MCF 10A (cell line): ENCODE measurements at regions of chr19 and their contacts with region 1.

Region 1: GRCh38 chr19:51777570-51778462 is 16.8 kb downstream of the FPR2 start:
- DNase-seq: peak; percentile 91
- H3K4me3 Mint-ChIP-seq: no peak overlapping the region
- H3K27ac Mint-ChIP-seq: no peak overlapping the region
- H3K4me1 Mint-ChIP-seq: peaks cover 6% of the 10 kb centered on the region
- H3K27me3 Mint-ChIP-seq: peaks cover 15% of the 10 kb centered on the region
- CTCF ChIP-seq: peak; percentile 80

Region 2: GRCh38 chr19:51676566-51677083 is 101.2 kb before region 1 on chr19:
- CTCF ChIA-PET with region 1: interaction called, 10 read pairs
- POLR2A ChIA-PET with region 1: no interaction called
- intact Hi-C with region 1: no loop called
- DNase-seq: no peak
- H3K4me3 Mint-ChIP-seq: no peak overlapping the region
- H3K27ac Mint-ChIP-seq: no peak overlapping the region
- H3K4me1 Mint-ChIP-seq: no peaks in the 10 kb centered on the region
- H3K27me3 Mint-ChIP-seq: no peaks in the 10 kb centered on the region
- CTCF ChIP-seq: no peak

Region 3: GRCh38 chr19:51712460-51713083 is 65.2 kb before region 1 on chr19:
- CTCF ChIA-PET with region 1: interaction called, 138 read pairs
- POLR2A ChIA-PET with region 1: interaction called, 27 read pairs
- intact Hi-C with region 1: loop called (anchors 1 kb)
- DNase-seq: peak; percentile 79
- H3K4me3 Mint-ChIP-seq: no peak overlapping the region
- H3K27ac Mint-ChIP-seq: peak overlapping the region; percentile 13
- H3K4me1 Mint-ChIP-seq: peaks cover 43% of the 10 kb centered on the region
- H3K27me3 Mint-ChIP-seq: no peaks in the 10 kb centered on the region
- CTCF ChIP-seq: peak; percentile 75

Region 4: GRCh38 chr19:51726049-51726448 is 51.8 kb before region 1 on chr19:
- CTCF ChIA-PET with region 1: interaction called, 10 read pairs
- POLR2A ChIA-PET with region 1: interaction called, 11 read pairs
- intact Hi-C with region 1: loop called (anchors 5 kb)
- DNase-seq: peak; percentile 94
- H3K4me3 Mint-ChIP-seq: peak overlapping the region; percentile 45
- H3K27ac Mint-ChIP-seq: peak overlapping the region; percentile 85
- H3K4me1 Mint-ChIP-seq: peaks cover 51% of the 10 kb centered on the region
- H3K27me3 Mint-ChIP-seq: no peaks in the 10 kb centered on the region
- CTCF ChIP-seq: no peak

Region 5: DNA sequence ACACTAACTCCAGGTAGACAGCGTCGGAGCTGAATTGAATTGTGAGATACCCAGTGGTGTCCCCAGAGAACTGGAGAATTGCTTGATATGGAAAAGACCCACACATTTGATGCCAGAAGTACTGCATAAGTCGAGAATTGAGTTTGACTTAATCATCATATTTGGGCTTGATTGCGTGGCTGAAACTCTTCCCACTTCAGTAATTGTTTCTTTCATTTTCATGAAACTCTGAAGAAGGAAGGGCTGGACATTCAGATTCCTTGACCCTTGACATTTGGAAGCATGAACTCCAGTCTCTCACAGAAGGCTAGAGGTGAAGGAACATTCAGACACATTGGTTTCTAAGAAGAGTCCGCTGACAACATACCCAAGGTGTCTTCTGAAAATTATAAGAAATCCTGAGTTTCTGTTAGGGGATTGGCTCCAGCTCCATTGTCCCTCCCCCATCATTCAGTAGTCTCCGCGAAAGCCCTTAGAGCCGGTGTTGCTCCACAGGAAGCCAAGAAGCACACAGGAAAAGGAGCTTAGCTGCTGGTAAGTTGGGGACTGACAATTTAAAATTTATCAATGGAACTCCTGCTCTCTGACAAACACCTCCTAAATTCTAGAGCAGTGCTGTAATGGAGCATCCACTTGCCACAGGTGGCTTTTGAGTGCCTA is 17.0 kb before region 1 on chr19 and contains the start of gene FPR2:
- CTCF ChIA-PET with region 1: interaction called, 11 read pairs
- POLR2A ChIA-PET with region 1: interaction called, 3 read pairs
- intact Hi-C with region 1: no loop called
- DNase-seq: no peak
- H3K4me3 Mint-ChIP-seq: no peak within 1 kb of the TSS
- H3K27ac Mint-ChIP-seq: no peak within 1 kb of the TSS
- H3K4me1 Mint-ChIP-seq: peaks cover 8% of the 10 kb centered on the region
- H3K27me3 Mint-ChIP-seq: peaks cover 16% of the 10 kb centered on the region
- CTCF ChIP-seq: no peak
- total RNA-seq, gene FPR2: not detected in 2 replicates

Region 6: GRCh38 chr19:51807111-51807701 is 29.4 kb after region 1 on chr19:
- CTCF ChIA-PET with region 1: interaction called, 10 read pairs
- POLR2A ChIA-PET with region 1: interaction called, 3 read pairs
- intact Hi-C with region 1: no loop called
- DNase-seq: no peak
- H3K4me3 Mint-ChIP-seq: no peak overlapping the region
- H3K27ac Mint-ChIP-seq: no peak overlapping the region
- H3K4me1 Mint-ChIP-seq: peaks cover 29% of the 10 kb centered on the region
- H3K27me3 Mint-ChIP-seq: no peaks in the 10 kb centered on the region
- CTCF ChIP-seq: no peak

Region 7: DNA sequence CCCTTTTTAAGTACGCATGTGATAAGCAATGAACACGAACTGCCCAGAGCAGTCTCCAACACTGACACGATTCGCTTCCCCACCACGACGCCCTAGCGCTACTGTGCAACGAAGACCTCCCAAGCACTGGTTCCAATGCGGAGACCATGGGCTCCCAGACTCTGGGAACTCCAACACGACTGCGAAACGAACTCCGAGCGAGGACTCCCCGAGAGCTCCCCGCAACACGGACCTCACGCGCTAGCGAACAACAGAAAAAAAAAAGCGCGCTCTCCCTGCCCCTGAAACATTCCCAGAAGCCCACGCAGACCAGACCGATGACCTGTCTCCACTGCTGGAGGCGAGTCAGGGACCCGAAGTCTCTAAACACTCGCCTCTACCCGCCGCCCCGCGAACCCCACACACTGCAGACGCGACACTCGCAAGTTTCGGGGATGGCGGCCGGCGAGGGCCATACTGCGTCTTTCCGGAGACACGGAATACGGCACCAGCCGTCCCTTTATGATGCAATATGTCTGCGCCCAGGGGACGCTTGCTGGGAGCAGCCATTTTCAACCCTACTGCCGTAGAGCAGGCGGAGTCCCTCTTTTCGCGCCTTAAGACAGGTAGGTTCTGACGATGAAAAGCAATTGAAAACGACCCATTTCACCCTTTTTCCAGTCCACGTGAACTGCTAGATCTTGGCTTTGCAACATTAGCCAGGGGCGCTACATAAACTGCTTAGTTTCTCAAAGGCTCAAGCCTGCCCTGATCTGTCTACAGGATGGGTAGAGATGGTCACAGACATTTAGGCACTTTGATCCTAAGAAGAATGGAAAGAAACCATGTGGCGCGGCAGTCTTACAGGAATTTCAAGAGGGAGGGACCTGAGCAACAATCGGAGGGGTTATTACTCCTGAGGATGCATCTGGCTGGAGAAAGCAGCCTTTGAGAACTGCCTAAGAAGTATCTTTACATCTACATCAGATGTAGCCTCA is 110.0 kb after region 1 on chr19 and contains the start of gene ZNF577:
- CTCF ChIA-PET with region 1: no interaction called
- POLR2A ChIA-PET with region 1: no interaction called
- intact Hi-C with region 1: no loop called
- DNase-seq: no peak
- H3K4me3 Mint-ChIP-seq: peak within 1 kb of the TSS; percentile 78
- H3K27ac Mint-ChIP-seq: peak within 1 kb of the TSS; percentile 49
- H3K4me1 Mint-ChIP-seq: no peaks in the 10 kb centered on the region
- H3K27me3 Mint-ChIP-seq: no peaks in the 10 kb centered on the region
- CTCF ChIP-seq: no peak
- total RNA-seq, gene ZNF577: 6.3 and 8.4 TPM in 2 replicates